Activated B cell treated with CpG ODN at 0.5 μM for 24 hours (primary cell): ENCODE measurements at regions of chr11 and their contacts with region 1.

Region 1: GRCh38 chr11:75547580-75548058 is 14.4 kb upstream of the SERPINH1 start:
- DNase-seq: no peak
- ATAC-seq: peak; percentile 61
- H3K4me3 Mint-ChIP-seq: no peak overlapping the region
- H3K27ac Mint-ChIP-seq: no peak overlapping the region
- H3K4me1 Mint-ChIP-seq: no peaks in the 10 kb centered on the region
- H3K27me3 Mint-ChIP-seq: peaks cover 17% of the 10 kb centered on the region
- CTCF ChIP-seq: no peak

Region 2: GRCh38 chr11:74980634-74981033 is 567.0 kb before region 1 on chr11:
- CTCF ChIA-PET with region 1: no interaction called
- POLR2A ChIA-PET with region 1: no interaction called
- intact Hi-C with region 1: no loop called
- DNase-seq: no peak
- ATAC-seq: no peak
- H3K4me3 Mint-ChIP-seq: no peak overlapping the region
- H3K27ac Mint-ChIP-seq: no peak overlapping the region
- H3K4me1 Mint-ChIP-seq: peaks cover 6% of the 10 kb centered on the region
- H3K27me3 Mint-ChIP-seq: no peaks in the 10 kb centered on the region
- CTCF ChIP-seq: no peak

Region 3: GRCh38 chr11:75667831-75668450 is 120.3 kb after region 1 on chr11:
- CTCF ChIA-PET with region 1: no interaction called
- POLR2A ChIA-PET with region 1: no interaction called
- intact Hi-C with region 1: loop called (anchors 5 kb)
- DNase-seq: peak; percentile 45
- ATAC-seq: peak; percentile 43
- H3K4me3 Mint-ChIP-seq: peak overlapping the region; percentile 87
- H3K27ac Mint-ChIP-seq: no peak overlapping the region
- H3K4me1 Mint-ChIP-seq: peaks cover 15% of the 10 kb centered on the region
- H3K27me3 Mint-ChIP-seq: peaks cover 50% of the 10 kb centered on the region
- CTCF ChIP-seq: no peak

Region 4: DNA sequence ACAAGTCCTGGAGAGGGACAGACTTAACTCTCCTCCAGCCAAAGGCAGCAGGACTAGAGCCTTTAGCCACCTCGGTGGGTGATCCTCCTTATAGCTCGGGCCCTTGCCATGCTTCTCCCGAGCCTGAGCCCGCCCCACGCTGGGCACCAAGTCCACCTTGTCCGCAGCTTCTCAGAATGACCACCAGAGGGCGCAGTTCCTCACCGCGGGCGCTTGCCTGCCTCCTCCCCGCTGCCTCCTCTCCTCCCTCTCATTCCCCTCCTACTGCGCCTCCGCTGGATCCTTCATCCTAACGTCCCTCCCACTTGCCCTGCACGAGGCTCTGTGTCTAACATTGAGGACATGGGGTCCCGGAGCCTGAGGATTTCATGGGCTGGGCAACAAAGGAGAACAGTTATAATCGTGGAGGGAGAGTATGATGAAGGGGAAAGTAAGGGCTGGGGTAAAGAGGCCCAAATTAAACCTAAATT is 158.7 kb after region 1 on chr11:
- CTCF ChIA-PET with region 1: no interaction called
- POLR2A ChIA-PET with region 1: no interaction called
- intact Hi-C with region 1: loop called (anchors 2 kb)
- DNase-seq: peak; percentile 51
- ATAC-seq: peak; percentile 92
- H3K4me3 Mint-ChIP-seq: no peak overlapping the region
- H3K27ac Mint-ChIP-seq: no peak overlapping the region
- H3K4me1 Mint-ChIP-seq: peaks cover 11% of the 10 kb centered on the region
- H3K27me3 Mint-ChIP-seq: peaks cover 4% of the 10 kb centered on the region
- CTCF ChIP-seq: peak; percentile 33

Region 5: DNA sequence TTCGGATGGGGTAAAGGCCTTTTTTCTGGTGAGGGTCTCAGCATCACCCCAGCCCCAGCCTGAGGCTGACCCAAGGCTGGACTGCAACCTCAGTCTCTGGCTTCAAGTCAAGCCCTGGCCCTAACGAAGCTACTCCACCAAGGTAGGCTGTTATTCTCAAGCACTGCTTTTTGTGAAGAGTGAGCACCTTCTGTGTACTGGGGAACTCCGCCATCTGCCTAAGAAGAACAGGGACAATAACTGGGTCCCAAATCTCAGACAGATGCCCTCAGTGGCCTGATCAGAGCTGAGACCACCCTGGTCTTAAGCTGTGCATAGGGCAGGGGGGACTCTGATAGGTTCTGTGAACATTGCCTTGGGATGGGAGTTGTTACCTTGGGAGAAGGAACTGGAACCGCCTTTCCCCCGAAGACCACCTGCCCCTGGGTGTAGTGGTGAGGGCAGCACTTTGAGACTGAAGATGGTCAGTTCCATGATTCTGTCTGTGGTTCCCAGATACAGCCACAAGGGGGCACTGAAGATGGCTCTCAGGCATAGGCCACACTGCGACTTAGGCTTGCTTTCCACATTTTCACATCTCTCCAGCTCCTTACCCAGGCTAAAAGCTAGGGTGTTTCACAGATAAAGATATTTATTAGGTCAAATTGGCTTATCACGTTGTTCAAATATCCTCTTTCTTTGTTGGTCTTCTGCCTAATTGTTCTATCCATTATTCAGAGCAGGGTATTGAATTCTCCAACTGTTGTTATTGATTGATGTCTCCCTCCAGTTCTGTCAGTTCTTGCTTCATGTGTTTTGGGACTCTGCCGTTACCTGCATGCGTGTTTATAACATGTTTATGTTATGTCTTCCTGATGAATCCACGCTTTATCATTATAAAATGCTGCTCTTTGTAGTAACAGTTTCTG is 255.5 kb after region 1 on chr11:
- CTCF ChIA-PET with region 1: no interaction called
- POLR2A ChIA-PET with region 1: no interaction called
- intact Hi-C with region 1: loop called (anchors 2 kb)
- DNase-seq: peak; percentile 50
- ATAC-seq: peak; percentile 95
- H3K4me3 Mint-ChIP-seq: no peak overlapping the region
- H3K27ac Mint-ChIP-seq: no peak overlapping the region
- H3K4me1 Mint-ChIP-seq: peaks cover 15% of the 10 kb centered on the region
- H3K27me3 Mint-ChIP-seq: no peaks in the 10 kb centered on the region
- CTCF ChIP-seq: peak; percentile 17

Region 6: DNA sequence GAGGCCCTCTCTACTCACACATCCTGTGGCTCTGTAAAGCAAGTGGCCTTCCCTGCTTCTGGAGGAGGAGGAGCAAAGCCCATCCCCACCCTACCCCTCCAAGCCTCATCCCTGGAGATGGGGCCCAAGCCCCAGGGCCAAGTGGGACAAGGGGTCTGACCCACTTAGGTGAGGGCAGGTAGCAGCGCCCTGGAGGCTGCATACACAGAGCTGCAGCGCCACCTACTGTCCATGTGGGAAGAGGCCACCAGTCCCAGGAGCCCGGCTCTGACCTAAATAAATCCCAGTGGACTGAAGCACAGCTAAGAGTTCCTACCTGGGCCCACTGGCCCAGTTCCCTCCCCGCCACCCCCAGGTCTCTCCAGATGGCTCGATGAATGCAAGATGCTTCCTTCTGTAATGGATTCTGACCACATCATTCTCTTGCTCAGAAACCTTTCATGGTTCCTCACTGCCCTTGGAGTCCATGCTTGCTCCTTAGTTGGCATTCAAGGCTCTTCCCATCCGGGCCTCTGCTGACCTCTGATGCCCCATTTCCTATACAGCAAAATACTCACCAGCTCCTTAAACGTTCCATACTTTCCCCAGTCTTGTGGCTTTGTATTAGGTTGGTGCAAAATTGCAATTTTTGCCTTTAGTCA is 771.2 kb after region 1 on chr11:
- CTCF ChIA-PET with region 1: no interaction called
- POLR2A ChIA-PET with region 1: no interaction called
- intact Hi-C with region 1: loop called (anchors 1 kb)
- DNase-seq: peak; percentile 73
- ATAC-seq: peak; percentile 97
- H3K4me3 Mint-ChIP-seq: no peak overlapping the region
- H3K27ac Mint-ChIP-seq: no peak overlapping the region
- H3K4me1 Mint-ChIP-seq: peaks cover 2% of the 10 kb centered on the region
- H3K27me3 Mint-ChIP-seq: peaks cover 40% of the 10 kb centered on the region
- CTCF ChIP-seq: no peak